Pancreas (tissue), 10 donors: ENCODE measurements at regions of chr12 and their contacts with region 1.

Region 1: GRCh38 chr12:122051231-122051876 is 27.2 kb upstream of the MLXIP start:
- DNase-seq: peak in 5 of 6 donors; percentile 50 to 73 (median 69)
- ATAC-seq: peak; percentile 64 to 76 (median 70)
- H3K4me3 ChIP-seq: no peak overlapping the region
- H3K27ac ChIP-seq: peak overlapping the region; percentile 49 to 86 (median 72)
- H3K4me1 ChIP-seq: peaks cover 10 to 22% (median 16%) of the 10 kb centered on the region in 3 donors
- H3K27me3 ChIP-seq: no peaks in the 10 kb centered on the region
- CTCF ChIP-seq: no peak

Region 2: GRCh38 chr12:121980191-121980891 is 71.0 kb before region 1 on chr12:
- intact Hi-C with region 1: no loop called
- DNase-seq: no peak
- ATAC-seq: peak in 2 of 4 donors; percentile 23 to 46
- H3K4me3 ChIP-seq: no peak overlapping the region
- H3K27ac ChIP-seq: no peak overlapping the region
- H3K4me1 ChIP-seq: no peaks in the 10 kb centered on the region
- H3K27me3 ChIP-seq: no peaks in the 10 kb centered on the region
- CTCF ChIP-seq: no peak

Region 3: DNA sequence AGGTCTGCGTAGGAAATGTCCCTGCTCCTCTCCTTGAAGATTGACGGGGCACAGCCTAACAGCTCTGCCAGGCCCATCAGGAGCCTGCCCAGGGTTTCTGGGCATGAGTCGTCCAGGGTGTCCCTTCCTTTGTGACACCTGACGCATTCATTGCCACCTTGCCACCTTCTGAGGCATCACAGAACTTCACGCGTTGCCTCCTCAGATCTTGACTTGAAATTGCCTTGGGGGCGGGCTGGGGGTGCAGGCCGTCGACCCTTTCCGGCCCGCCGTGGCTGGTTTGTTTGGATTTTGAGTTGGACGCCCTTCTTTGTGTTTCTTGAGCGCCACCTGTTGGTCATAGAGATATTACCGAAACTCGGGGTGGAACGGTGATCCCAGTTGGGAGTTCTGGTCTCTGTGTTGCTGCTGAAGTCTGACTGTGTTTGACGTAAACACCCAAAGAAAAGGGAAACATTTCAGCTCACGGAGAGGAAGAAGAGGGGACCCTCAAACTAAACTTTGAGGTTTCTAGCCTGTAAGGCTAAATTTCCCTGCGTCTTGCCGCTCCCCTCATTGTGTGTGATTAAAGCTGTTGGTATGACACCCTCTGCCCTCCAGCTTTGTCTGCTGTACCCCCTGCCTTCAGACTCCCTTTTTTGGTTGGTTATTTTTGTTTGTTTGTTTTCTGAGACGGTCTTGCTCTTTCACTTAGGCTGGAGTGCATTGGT is 71.9 kb after region 1 on chr12:
- intact Hi-C with region 1: loop called (anchors 2 to 5 kb)
- DNase-seq: peak; percentile 58 to 78 (median 64)
- ATAC-seq: peak; percentile 55 to 80 (median 76)
- H3K4me3 ChIP-seq: no peak overlapping the region
- H3K27ac ChIP-seq: peak overlapping the region in 2 of 4 donors; percentile 29 to 44
- H3K4me1 ChIP-seq: peaks cover 0 to 9% (median 4%) of the 10 kb centered on the region in 3 donors
- H3K27me3 ChIP-seq: no peaks in the 10 kb centered on the region
- CTCF ChIP-seq: peak; percentile 36 to 66 (median 54)

Region 4: GRCh38 chr12:122182887-122183585 is 131.7 kb after region 1 on chr12 and contains the start of gene LRRC43:
- intact Hi-C with region 1: loop called in 1 of 3 experiments (anchors 10 kb)
- DNase-seq: peak; percentile 25 to 79 (median 49)
- ATAC-seq: peak; percentile 87 to 97 (median 90)
- H3K4me3 ChIP-seq: peak within 1 kb of the TSS; percentile 18 to 51 (median 34)
- H3K27ac ChIP-seq: no peak within 1 kb of the TSS
- H3K4me1 ChIP-seq: peaks cover 0 to 4% (median 0%) of the 10 kb centered on the region in 3 donors
- H3K27me3 ChIP-seq: no peaks in the 10 kb centered on the region
- CTCF ChIP-seq: no peak
- total RNA-seq, gene LRRC43: 0.12 to 1.3 (median 0.47) TPM

Region 5: DNA sequence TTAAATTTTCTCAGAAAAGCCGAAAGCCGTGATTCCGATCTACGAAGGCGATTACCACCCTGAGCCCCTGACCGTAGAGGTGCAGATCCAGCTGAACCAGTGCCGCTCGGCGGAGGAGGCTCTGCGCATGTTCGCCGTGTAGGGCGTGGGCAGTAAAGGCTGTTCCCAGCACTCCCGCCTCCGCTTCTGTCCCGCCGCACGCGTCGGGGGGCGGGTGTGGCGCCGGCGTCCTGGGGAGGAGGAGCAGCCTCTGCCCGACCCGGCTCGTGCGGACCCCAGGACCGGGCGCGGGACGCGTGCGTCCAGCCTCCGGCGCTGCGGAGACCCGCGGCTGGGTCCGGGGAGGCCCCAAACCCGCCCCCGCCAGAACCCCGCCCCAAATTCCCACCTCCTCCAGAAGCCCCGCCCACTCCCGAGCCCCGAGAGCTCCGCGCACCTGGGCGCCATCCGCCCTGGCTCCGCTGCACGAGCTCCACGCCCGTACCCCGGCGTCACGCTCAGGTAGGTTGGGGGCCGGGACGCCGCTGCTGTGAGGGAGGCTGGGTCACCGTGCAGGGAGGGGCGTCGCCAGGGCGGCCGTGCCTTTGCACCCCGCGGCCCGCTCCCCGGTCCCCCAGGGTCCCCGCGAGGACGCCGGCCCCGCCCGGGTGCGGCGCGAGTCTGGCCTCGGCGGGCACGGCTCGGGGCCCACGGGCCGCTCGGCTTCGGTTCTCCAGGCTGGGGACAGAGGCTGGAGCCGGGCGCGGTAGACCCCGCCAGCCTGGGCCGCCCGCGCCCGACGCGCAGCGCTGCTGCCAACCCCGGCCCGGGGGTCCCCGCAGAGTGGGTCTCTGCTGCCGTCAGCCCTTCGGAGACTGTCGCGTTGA is 152.2 kb after region 1 on chr12 and contains the start of gene B3GNT4:
- intact Hi-C with region 1: loop called in 1 of 3 experiments (anchors 5 kb)
- DNase-seq: peak; percentile 61 to 88 (median 71)
- ATAC-seq: peak; percentile 79 to 90 (median 86)
- H3K4me3 ChIP-seq: peak within 1 kb of the TSS; percentile 28 to 70 (median 44)
- H3K27ac ChIP-seq: no peak within 1 kb of the TSS
- H3K4me1 ChIP-seq: peaks cover 0 to 7% (median 5%) of the 10 kb centered on the region in 3 donors
- H3K27me3 ChIP-seq: no peaks in the 10 kb centered on the region
- CTCF ChIP-seq: no peak
- total RNA-seq, gene B3GNT4: 0.06 to 0.28 (median 0.12) TPM in 4 of 6 donors, not detected in the others